Activated CD4-positive, alpha-beta T cell treated with anti-CD3 and anti-CD28 coated beads, Interleukin-2, amount 10 ng/mL, durations not matched to agents 7 days and 5 days (primary cell): ENCODE measurements at regions of chr11 and their contacts with region 1.

Region 1: DNA sequence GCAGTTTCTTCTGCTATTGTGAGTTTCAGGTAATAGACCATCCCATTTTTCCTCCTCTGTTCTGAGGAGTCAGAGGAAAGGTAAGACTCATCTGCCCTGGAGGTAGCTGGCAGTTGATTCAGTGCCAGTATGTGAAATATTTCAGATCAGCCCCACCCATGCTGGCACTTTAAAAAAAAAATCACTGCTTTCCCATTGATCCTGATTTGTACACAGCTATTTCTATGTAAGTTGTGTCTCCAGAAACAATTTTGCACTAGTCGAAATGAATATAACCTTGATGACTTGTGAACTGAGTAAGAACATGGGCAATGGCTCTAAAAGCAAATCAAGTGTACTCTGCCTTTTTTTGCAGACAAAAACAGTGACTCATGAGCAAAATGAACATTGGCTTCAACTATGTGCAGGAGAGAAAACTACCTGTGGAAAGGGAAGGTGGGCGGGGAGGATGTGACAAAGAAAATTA is 82.0 kb upstream of the OR5AK2 start:
- DNase-seq: no peak
- H3K4me3 Mint-ChIP-seq: no peak overlapping the region
- H3K27ac Mint-ChIP-seq: no peak overlapping the region
- H3K4me1 Mint-ChIP-seq: no peaks in the 10 kb centered on the region
- H3K27me3 Mint-ChIP-seq: no peaks in the 10 kb centered on the region

Region 2: GRCh38 chr11:57249384-57250319 is 342.9 kb after region 1 on chr11:
- CTCF ChIA-PET with region 1: no interaction called
- POLR2A ChIA-PET with region 1: interaction called, 15 read pairs
- DNase-seq: peak; percentile 57
- H3K4me3 Mint-ChIP-seq: no peak overlapping the region
- H3K27ac Mint-ChIP-seq: no peak overlapping the region
- H3K4me1 Mint-ChIP-seq: peaks cover 6% of the 10 kb centered on the region
- H3K27me3 Mint-ChIP-seq: peaks cover 19% of the 10 kb centered on the region